HAP-1 (cell line): ENCODE measurements at regions of chr3 and their contacts with region 1.

Region 1: GRCh38 chr3:78659386-78659987 is 1108.3 kb downstream of the ROBO1 start:
- DNase-seq: peak; percentile 40 to 59
- H3K4me3 ChIP-seq: no peak overlapping the region
- H3K4me1 ChIP-seq: peaks cover 2% of the 10 kb centered on the region; the same call in 1 of the 2 replicates
- H3K27me3 ChIP-seq: no peaks in the 10 kb centered on the region

Region 2: DNA sequence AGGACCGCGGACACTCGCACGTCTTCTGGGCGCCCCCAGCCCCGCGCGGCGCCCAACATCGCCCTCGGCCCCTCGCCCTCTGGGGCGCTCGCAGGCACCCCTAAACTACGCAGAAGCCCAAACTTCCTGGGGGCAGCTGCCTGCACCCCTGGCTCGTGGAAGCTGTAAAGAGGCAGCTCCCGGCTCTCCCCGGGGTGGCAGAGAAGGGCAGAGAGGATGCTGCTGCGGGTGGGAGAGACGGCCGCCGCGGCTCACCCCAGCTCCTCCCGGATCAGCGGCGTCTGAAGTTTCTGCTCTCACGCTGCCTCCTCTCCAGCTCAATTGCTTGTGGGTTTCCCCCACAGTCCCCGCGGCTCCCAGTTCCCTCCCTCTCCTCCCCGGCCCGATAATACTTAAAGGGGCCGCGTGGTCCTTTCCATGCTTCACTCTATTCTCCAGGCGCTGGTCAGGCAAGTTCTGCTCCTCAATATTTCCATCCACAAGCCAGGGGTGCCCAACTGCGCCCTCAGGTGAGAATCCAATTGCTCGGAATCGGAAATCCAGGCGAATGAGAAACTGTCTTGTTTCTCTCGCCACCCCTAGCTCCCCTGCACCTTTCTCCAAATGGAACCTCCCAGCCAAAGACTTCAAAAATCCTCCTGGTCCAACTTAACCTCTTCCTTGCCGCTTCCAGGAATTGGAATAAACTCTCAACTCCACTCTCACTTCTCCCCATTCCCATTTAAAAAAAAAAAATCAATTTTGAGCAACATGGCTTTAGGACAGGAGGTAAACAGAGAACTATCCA is 359.8 kb after region 1 on chr3:
- in situ Hi-C with region 1: loop called (anchors 25 kb)
- DNase-seq: peak; percentile 91 to 94
- H3K4me3 ChIP-seq: peak overlapping the region; percentile 88
- H3K4me1 ChIP-seq: peaks cover 22% of the 10 kb centered on the region
- H3K27me3 ChIP-seq: no peaks in the 10 kb centered on the region

Region 3: GRCh38 chr3:79497447-79498111 is 838.1 kb after region 1 on chr3:
- in situ Hi-C with region 1: loop called (anchors 25 kb)
- DNase-seq: no peak
- H3K4me3 ChIP-seq: no peak overlapping the region
- H3K4me1 ChIP-seq: no peaks in the 10 kb centered on the region
- H3K27me3 ChIP-seq: no peaks in the 10 kb centered on the region

Region 4: DNA sequence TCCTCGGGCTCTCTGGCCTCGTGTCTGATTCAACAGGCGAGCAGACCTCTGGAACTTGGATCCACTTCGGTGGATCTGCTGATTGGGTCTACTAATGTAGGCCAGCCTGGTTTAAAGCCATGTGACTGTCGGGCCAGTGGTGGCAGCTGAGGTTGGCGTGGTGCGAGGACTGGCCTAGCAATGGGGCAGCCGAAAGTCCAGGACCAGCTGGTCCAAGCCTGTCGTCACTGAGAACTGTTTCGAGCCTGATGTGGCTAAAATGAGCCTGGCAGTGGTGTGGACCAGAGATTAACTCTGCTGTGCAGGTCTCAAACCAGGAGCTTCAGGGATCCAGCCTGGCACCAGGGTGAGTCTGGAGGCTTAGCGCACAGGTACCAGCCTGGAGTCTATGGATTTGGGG is 1164.7 kb after region 1 on chr3:
- in situ Hi-C with region 1: no loop called
- DNase-seq: no peak
- H3K4me3 ChIP-seq: no peak overlapping the region
- H3K4me1 ChIP-seq: no peaks in the 10 kb centered on the region
- H3K27me3 ChIP-seq: no peaks in the 10 kb centered on the region